ENCODE measurements at regions of chr6 and their contacts with region 1.

Region 1: GRCh38 chr6:26568601-26569432 is 27.9 kb upstream of the ABT1 start:
- DNase-seq: peak; percentile 99
- ATAC-seq: peak; percentile 74
- H3K4me3 ChIP-seq: peak overlapping the region; percentile 69 to 82
- H3K27ac ChIP-seq: peak overlapping the region; percentile 63; the same call in 1 of the 2 replicates
- H3K4me1 ChIP-seq: peaks cover 9% of the 10 kb centered on the region; the same call in 1 of the 2 replicates
- H3K27me3 ChIP-seq: no peaks in the 10 kb centered on the region
- CTCF ChIP-seq: peak; percentile 82

Region 2: GRCh38 chr6:26322645-26323482 is 246.0 kb before region 1 on chr6:
- CTCF ChIA-PET with region 1: interaction called, 11 read pairs
- POLR2A ChIA-PET with region 1: no interaction called
- in situ Hi-C with region 1: no loop called
- intact Hi-C with region 1: no loop called
- DNase-seq: peak; percentile 98
- ATAC-seq: peak; percentile 87
- H3K4me3 ChIP-seq: peak overlapping the region; percentile 71 to 75
- H3K27ac ChIP-seq: peak overlapping the region; percentile 90; the same call in 1 of the 2 replicates
- H3K4me1 ChIP-seq: peaks cover 26% of the 10 kb centered on the region
- H3K27me3 ChIP-seq: no peaks in the 10 kb centered on the region
- CTCF ChIP-seq: no peak

Region 3: GRCh38 chr6:26342106-26343004 is 226.5 kb before region 1 on chr6:
- CTCF ChIA-PET with region 1: interaction called, 12 read pairs
- POLR2A ChIA-PET with region 1: no interaction called
- in situ Hi-C with region 1: no loop called
- intact Hi-C with region 1: no loop called
- DNase-seq: no peak
- ATAC-seq: peak; percentile 10; the same call in 1 of the 2 replicates
- H3K4me3 ChIP-seq: peak overlapping the region; percentile 17 to 58
- H3K27ac ChIP-seq: no peak overlapping the region
- H3K4me1 ChIP-seq: 0 out of 2 replicates have a peak, but pooled peaks cover 5% of the 10 kb centered on the region
- H3K27me3 ChIP-seq: no peaks in the 10 kb centered on the region
- CTCF ChIP-seq: no peak

Region 4: DNA sequence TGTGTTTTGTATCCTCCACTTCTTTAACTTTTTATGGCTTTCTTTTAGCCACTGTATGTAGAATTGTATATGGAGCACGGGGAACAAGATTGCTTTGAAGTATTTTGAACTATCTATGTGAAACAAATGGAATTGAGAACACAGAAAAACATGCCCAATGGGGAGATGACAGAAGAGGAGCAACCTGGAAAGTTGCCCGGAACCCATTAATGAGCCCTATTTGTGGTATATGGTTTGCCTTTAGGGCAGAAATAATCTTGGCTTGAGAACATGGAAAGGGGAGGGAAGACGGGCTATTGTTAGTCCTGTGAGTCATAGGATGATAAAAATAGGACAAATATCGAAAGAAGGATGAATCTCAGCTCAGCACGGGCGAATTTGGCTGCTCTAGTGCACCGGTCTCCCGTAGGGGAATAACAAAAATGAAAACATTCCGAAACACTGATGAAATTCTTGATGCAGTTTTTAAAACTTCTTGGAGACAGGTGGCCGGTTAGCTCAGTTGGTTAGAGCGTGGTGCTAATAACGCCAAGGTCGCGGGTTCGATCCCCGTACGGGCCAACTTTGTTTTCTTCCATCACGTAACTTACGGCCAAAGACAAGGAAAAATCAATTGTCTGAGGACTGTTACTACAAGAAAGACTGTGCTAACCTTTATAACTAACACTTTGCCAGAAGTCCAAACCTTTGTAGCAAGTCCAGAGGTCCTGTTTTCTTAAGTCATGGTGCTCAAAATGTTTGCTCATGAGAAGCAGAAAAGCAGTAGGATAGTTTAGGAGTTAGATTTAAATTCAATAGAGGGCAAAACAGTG is 15.0 kb before region 1 on chr6:
- CTCF ChIA-PET with region 1: interaction called, 8 read pairs
- POLR2A ChIA-PET with region 1: interaction called, 8 read pairs
- in situ Hi-C with region 1: no loop called
- intact Hi-C with region 1: loop called (anchors 2 kb)
- DNase-seq: peak; percentile 97
- ATAC-seq: peak; percentile 57
- H3K4me3 ChIP-seq: peak overlapping the region; percentile 77 to 96
- H3K27ac ChIP-seq: peak overlapping the region; percentile 73
- H3K4me1 ChIP-seq: peaks cover 23% of the 10 kb centered on the region
- H3K27me3 ChIP-seq: no peaks in the 10 kb centered on the region
- CTCF ChIP-seq: no peak

Region 5: DNA sequence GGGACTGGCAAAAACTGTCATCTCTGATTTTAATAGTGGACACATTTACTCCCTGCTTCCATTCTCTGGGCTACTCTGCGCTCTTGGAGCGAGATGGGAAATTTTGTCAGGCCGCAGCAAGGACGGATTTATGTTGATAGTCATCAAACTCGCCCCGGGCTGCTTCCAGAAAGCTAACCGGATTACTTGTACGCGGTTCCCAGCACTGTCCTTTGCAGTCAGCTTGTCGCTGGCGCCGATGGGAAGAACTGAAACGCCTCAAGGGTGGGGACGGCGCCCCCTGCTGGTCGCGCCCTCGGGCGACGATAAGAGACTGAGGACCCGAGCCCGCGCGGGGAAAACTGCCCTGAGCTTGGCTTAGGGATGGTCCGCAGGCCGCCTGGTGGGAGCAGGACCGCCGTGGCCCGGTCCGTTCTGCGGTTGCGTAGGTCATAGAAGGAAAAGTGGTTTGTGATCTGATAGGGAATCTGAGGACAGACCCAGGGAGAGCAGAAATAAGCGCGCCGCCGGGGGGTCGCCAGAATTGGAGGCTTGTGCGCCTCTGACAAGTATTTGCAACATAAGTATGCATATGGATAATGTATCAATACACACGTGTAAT is 27.0 kb after region 1 on chr6:
- CTCF ChIA-PET with region 1: interaction called, 39 read pairs
- POLR2A ChIA-PET with region 1: no interaction called
- in situ Hi-C with region 1: no loop called
- intact Hi-C with region 1: loop called (anchors 1 kb)
- DNase-seq: peak; percentile 78
- ATAC-seq: peak; percentile 86
- H3K4me3 ChIP-seq: peak overlapping the region; percentile 94 to 96
- H3K27ac ChIP-seq: peak overlapping the region; percentile 90
- H3K4me1 ChIP-seq: peaks cover 3% of the 10 kb centered on the region; the same call in 1 of the 2 replicates
- H3K27me3 ChIP-seq: no peaks in the 10 kb centered on the region
- CTCF ChIP-seq: peak; percentile 96

Region 6: GRCh38 chr6:27237089-27237803 is 668.4 kb after region 1 on chr6:
- CTCF ChIA-PET with region 1: no interaction called
- POLR2A ChIA-PET with region 1: no interaction called
- in situ Hi-C with region 1: no loop called
- intact Hi-C with region 1: loop called (anchors 10 kb)
- DNase-seq: peak; percentile 91
- ATAC-seq: peak; percentile 85
- H3K4me3 ChIP-seq: peak overlapping the region; percentile 67 to 75
- H3K27ac ChIP-seq: peak overlapping the region; percentile 77
- H3K4me1 ChIP-seq: peaks cover 13% of the 10 kb centered on the region
- H3K27me3 ChIP-seq: no peaks in the 10 kb centered on the region; the same call in 1 of the 2 replicates
- CTCF ChIP-seq: no peak

Measured in Panc1 (cell line).